ENCODE measurements at regions of chr18 and their contacts with region 1.

Region 1: DNA sequence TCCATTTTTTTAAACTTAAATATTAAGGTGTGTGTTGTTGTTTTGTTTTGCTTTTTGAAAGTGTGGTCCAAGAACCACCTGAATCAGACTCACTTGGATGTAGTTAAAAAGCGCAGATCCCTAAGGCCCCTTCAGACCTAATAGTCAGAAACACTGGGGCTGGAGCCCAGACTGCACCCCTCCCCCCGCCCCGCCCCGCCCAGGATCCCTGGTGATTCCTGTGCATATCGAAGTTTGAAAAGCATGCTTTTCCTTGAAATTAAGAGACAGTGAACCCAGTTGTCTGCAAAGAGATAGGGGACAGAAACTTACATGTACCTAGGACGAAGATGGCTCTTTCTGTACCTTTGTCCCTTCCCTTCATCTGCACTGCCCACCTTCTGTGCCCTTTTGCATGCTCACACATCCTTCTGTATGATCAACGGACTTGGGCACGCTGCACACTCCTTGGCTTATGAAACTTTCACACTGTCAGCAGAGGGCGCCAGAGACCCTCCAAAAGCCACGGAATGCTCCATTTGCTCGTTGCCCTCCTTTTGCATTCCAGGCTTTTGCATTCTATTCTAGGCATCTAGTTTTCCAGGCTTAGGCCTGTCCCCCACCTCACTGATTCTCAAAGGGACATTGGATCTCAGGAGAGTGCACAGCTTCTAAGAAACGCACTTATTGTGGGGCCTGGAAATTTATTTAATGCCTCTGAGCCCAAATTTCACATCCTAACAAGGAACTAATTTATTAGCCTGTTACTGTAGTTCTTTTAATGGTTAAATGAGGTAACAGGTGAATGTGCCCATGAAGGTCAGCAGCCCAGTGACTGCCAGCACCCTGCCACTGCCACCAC is 32.8 kb upstream of the SLC14A1 start:
- DNase-seq: peak; percentile 67 to 72 (median 68)
- H3K4me3 ChIP-seq: no peak overlapping the region
- H3K4me3 Mint-ChIP-seq: peak overlapping the region in 2 of 8 donors; percentile 59 to 61
- H3K27ac ChIP-seq: no peak overlapping the region
- H3K27ac Mint-ChIP-seq: peak overlapping the region in 3 of 7 donors; percentile 19 to 82 (median 49)
- H3K4me1 ChIP-seq: peaks cover 53% of the 10 kb centered on the region
- H3K4me1 Mint-ChIP-seq: peaks cover 39 to 51% (median 43%) of the 10 kb centered on the region in 4 donors
- H3K27me3 ChIP-seq: no peaks in the 10 kb centered on the region
- H3K27me3 Mint-ChIP-seq: peaks cover 0 to 3% of the 10 kb centered on the region in 2 donors

Region 2: DNA sequence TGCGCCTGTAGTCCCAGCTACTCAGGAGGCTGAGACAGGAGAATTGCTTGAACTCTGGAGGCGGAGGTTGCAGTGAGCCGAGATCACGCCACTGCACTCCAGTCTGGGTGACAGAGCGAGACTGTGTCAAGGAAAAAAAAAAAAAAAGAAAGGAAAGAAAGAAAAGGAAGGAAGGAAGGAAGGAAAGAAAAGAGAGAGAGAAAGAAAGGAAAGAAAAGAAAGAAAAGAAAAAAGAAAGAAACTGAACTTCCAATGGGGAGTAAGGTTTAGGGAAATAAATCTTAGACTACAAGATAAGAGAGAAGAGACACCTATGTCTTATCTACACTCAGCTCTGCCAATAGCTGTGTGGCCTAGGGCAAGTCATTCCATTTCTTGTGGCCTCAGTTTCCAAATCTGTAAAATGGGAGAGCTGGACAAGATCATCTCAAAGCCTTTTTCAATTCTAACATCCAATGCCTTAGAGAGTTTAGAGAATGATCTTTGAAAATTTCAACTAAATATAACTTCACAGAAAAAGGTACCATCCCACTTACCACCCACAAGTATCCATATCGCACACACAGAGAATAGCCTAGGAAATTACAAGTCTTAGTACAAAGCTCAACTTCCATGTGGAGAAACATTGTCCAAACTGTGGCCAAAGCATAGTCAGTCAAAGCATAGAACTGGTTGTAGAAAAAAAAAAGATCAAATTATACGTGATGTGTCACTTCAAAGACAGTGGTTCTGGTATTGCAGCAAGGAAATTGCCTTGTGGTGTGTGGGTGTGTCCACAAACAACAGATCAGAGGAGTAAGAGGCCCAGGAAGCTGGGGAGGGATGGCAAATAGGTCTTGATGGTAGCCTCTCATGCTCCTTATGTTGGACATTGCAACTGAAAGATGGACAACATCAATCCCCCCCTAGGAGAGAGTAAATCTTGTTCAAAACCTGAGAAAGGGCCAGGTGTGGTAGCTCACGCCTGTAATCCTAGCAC is 33.5 kb before region 1 on chr18:
- CTCF ChIA-PET with region 1: interaction called, 304 read pairs
- POLR2A ChIA-PET with region 1: interaction called, 169 read pairs
- intact Hi-C with region 1: no loop called
- DNase-seq: peak in 4 of 5 donors; percentile 45 to 61 (median 56)
- H3K4me3 ChIP-seq: no peak overlapping the region
- H3K4me3 Mint-ChIP-seq: peak overlapping the region in 7 of 8 donors; percentile 36 to 71 (median 51)
- H3K27ac ChIP-seq: peak overlapping the region; percentile 12
- H3K27ac Mint-ChIP-seq: peak overlapping the region; percentile 19 to 71 (median 31)
- H3K4me1 ChIP-seq: peaks cover 33% of the 10 kb centered on the region
- H3K4me1 Mint-ChIP-seq: peaks cover 26 to 57% (median 35%) of the 10 kb centered on the region in 4 donors
- H3K27me3 ChIP-seq: no peaks in the 10 kb centered on the region
- H3K27me3 Mint-ChIP-seq: no peaks in the 10 kb centered on the region

Region 3: GRCh38 chr18:45802608-45803492 is 111.7 kb after region 1 on chr18:
- CTCF ChIA-PET with region 1: interaction called, 12 read pairs
- POLR2A ChIA-PET with region 1: no interaction called
- intact Hi-C with region 1: no loop called
- DNase-seq: no peak
- H3K4me3 ChIP-seq: no peak overlapping the region
- H3K4me3 Mint-ChIP-seq: no peak overlapping the region
- H3K27ac ChIP-seq: no peak overlapping the region
- H3K27ac Mint-ChIP-seq: no peak overlapping the region
- H3K4me1 ChIP-seq: no peaks in the 10 kb centered on the region
- H3K4me1 Mint-ChIP-seq: peaks cover 0 to 4% (median 0%) of the 10 kb centered on the region in 4 donors
- H3K27me3 ChIP-seq: no peaks in the 10 kb centered on the region
- H3K27me3 Mint-ChIP-seq: peaks cover 9 to 10% of the 10 kb centered on the region in 2 donors

Region 4: DNA sequence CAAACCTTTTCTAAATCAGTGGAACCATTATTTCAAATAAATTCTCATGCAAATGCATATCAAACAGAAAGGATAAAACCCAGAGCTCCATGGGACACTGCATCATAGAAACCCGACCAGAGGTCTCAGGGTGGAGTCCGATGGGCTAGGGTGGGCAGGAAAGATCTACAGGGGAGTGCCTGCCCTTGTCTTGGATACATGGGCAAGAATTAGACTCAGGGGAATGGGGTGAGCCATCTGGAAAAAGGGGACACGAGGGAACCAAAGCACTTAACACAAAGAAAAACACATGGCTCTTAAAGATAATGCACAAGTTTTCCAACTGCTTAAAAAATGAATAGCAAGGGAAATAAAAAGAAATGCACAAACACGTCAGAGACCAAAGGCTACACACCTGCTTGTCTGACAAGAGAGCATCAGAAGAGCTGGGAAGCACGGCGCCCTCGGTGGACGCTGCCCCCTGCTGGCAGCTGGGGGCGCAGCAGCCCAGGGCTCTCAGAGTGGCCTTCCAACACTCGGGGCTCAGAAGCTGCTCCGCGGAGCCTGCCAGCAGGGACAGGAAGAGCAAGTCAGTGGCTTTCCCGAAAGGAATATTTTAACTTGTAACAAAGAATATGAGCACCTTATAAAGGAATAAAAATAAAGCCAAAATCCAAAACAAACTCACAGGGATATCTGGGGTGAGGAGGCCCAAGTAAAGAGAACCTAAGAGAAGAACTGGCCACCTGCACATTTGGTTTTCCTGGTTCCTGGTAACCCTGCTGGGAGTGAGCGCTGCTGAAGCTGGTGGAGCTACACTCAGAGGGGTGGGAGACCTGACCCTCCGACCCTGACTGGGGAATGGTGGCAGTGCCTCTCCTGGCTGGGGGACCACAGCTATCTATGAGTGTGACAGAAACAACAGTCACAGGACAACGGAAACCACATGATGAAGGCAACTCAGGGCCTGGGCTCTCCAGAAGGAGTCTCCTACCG is 188.8 kb after region 1 on chr18:
- CTCF ChIA-PET with region 1: interaction called, 152 read pairs
- POLR2A ChIA-PET with region 1: interaction called, 5 read pairs
- intact Hi-C with region 1: loop called (anchors 1 kb)
- DNase-seq: peak; percentile 64 to 74 (median 68)
- H3K4me3 ChIP-seq: no peak overlapping the region
- H3K4me3 Mint-ChIP-seq: peak overlapping the region in 1 of 8 donors; percentile 17
- H3K27ac ChIP-seq: no peak overlapping the region
- H3K27ac Mint-ChIP-seq: peak overlapping the region in 5 of 7 donors; percentile 30 to 82 (median 51)
- H3K4me1 ChIP-seq: peaks cover 16% of the 10 kb centered on the region
- H3K4me1 Mint-ChIP-seq: peaks cover 10 to 19% (median 16%) of the 10 kb centered on the region in 4 donors
- H3K27me3 ChIP-seq: no peaks in the 10 kb centered on the region
- H3K27me3 Mint-ChIP-seq: no peaks in the 10 kb centered on the region

Region 5: GRCh38 chr18:45967007-45967706 is 276.0 kb after region 1 on chr18 and contains the start of gene EPG5:
- CTCF ChIA-PET with region 1: no interaction called
- POLR2A ChIA-PET with region 1: interaction called, 6 read pairs
- intact Hi-C with region 1: loop called (anchors 1 kb)
- DNase-seq: peak; percentile 89 to 94 (median 91)
- H3K4me3 ChIP-seq: peak within 1 kb of the TSS; percentile 89 to 94
- H3K4me3 Mint-ChIP-seq: peak within 1 kb of the TSS; percentile 95 to 100 (median 98)
- H3K27ac ChIP-seq: peak within 1 kb of the TSS; percentile 72
- H3K27ac Mint-ChIP-seq: peak within 1 kb of the TSS; percentile 89 to 98 (median 97)
- H3K4me1 ChIP-seq: peaks cover 48% of the 10 kb centered on the region
- H3K4me1 Mint-ChIP-seq: peaks cover 31 to 55% (median 42%) of the 10 kb centered on the region in 4 donors
- H3K27me3 ChIP-seq: no peaks in the 10 kb centered on the region
- H3K27me3 Mint-ChIP-seq: no peaks in the 10 kb centered on the region
- total RNA-seq, gene EPG5: 64.3 to 69.0 TPM